Activated B cell treated with CpG ODN at 0.5 μM for 24 hours (primary cell): ENCODE measurements at regions of chr17 and their contacts with region 1.

Region 1: GRCh38 chr17:27609611-27610303 is 21.2 kb upstream of the LGALS9 start:
- DNase-seq: no peak
- ATAC-seq: no peak
- H3K4me3 Mint-ChIP-seq: no peak overlapping the region
- H3K27ac Mint-ChIP-seq: no peak overlapping the region
- H3K4me1 Mint-ChIP-seq: no peaks in the 10 kb centered on the region
- H3K27me3 Mint-ChIP-seq: no peaks in the 10 kb centered on the region
- CTCF ChIP-seq: no peak

Region 2: DNA sequence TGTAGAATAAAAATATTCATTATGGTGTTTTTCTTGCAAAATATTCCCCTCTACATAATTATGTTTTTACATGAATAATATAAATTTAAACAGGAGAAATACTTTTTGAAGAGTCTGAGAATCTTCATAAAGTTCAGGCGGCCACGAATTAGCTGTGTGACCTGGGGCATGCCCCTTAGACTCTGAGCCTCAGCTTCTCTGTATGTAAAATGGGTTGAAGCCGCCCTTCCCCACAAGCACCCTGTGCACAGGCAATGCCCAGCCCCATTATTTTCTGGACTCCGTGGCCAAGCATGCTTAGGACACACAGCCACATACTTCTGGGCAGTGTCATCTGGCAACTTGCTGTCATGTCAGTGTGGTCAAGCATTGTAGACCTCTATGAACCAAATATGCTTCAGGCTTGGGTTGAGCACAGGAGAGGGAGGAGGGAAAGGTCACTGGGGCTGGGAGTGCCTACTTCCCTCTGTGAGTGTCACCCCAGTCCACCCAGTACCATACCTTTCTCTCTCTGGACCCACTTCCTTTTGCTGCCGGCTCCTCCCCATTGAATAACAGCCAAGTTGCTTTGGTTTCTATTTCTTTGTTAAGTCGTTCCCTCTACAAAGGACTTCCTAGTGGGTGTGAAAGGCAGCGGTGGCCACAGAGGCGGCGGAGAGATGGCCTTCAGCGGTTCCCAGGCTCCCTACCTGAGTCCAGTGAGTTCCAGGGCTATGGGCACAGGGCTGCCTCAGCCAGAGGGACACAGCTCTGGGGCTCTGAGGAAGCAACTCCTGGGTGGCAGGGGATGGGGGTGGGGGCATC is 21.1 kb after region 1 on chr17 and contains the start of gene LGALS9:
- CTCF ChIA-PET with region 1: interaction called, 3 read pairs
- POLR2A ChIA-PET with region 1: interaction called, 5 read pairs
- intact Hi-C with region 1: loop called (anchors 2 kb)
- DNase-seq: no peak
- ATAC-seq: peak; percentile 41
- H3K4me3 Mint-ChIP-seq: peak within 1 kb of the TSS; percentile 96
- H3K27ac Mint-ChIP-seq: peak within 1 kb of the TSS; percentile 94
- H3K4me1 Mint-ChIP-seq: peaks cover 50% of the 10 kb centered on the region
- H3K27me3 Mint-ChIP-seq: no peaks in the 10 kb centered on the region
- CTCF ChIP-seq: no peak
- total RNA-seq, gene LGALS9: 76.8 and 79.9 TPM in 2 replicates